Ascending aorta (tissue), 2 donors: ENCODE measurements at regions of chr21 and their contacts with region 1.

Region 1: DNA sequence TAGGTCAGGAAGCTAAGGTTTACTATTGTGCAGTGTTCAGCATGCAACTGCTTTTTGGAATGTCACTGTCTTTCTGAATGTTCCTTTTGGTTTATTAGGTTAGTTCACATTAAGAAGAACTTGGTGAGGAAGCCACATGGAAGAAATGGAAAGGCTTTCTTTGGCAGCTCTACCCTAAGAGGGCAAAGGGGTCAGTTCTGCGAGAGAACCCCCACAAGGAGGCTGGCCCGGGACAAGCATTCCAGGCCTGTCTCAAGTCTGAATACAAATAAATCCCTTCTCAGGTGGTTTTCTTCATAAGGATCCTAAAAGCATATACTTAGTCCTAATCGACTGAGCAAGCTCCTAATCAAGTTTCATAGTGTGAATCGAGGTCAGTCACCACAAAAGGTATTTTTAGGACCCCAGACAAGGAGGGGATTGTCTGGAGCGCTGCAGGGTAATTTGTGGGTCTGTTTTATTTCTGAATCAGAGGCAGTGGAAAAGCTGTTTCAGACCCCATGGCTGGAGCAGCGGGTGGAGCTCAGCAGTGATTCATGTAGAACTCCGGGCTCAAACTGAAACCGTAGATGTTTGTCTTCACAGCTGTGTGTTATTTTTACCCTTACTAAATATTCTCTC is 63.3 kb downstream of the ERG start:
- DNase-seq: peak in 1 of 2 donors; percentile 86
- H3K4me3 ChIP-seq: peak overlapping the region in 1 of 2 donors; percentile 57
- H3K27ac ChIP-seq: peak overlapping the region; percentile 89 to 92
- H3K4me1 ChIP-seq: peaks cover 15 to 60% of the 10 kb centered on the region in 2 donors
- H3K27me3 ChIP-seq: no peaks in the 10 kb centered on the region
- CTCF ChIP-seq: no peak

Region 2: GRCh38 chr21:37958537-37958936 is 476.5 kb before region 1 on chr21:
- intact Hi-C with region 1: no loop called
- DNase-seq: no peak
- H3K4me3 ChIP-seq: no peak overlapping the region
- H3K27ac ChIP-seq: no peak overlapping the region
- H3K4me1 ChIP-seq: no peaks in the 10 kb centered on the region
- H3K27me3 ChIP-seq: no peaks in the 10 kb centered on the region
- CTCF ChIP-seq: no peak

Region 3: DNA sequence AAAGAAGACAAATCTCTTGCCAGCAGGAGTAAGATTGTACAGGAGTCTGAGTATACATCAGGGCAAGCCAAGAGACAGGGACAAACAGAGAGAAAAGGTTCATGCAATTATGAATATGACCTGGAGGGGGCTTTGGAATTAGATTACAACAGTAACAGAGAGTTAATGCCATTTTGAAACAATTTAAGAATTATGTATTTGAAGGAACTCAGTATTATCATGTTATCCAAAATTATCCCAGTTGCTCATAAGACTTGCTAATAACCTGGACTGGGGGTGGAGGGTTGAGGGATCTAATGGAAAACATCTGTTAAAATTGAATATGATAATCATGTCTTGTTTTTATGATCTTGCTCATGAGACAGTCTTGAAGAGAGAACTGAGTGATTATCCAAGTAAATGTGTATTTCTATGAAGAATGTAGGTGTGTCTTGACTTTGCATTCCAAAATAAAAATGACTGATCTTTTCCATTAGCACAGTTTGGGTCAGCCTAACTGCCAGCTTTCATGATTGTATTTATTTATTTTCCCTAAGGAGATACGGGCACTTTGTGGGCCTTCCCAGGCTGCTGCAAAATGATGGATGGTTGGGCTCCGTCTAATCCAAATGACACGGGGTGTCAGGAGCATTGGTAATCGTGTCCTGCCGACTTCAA is 54.4 kb before region 1 on chr21:
- intact Hi-C with region 1: loop called (anchors 5 kb)
- DNase-seq: peak in 1 of 2 donors; percentile 78
- H3K4me3 ChIP-seq: peak overlapping the region in 1 of 2 donors; percentile 17
- H3K27ac ChIP-seq: peak overlapping the region; percentile 75 to 89
- H3K4me1 ChIP-seq: peaks cover 17 to 41% of the 10 kb centered on the region in 2 donors
- H3K27me3 ChIP-seq: no peaks in the 10 kb centered on the region
- CTCF ChIP-seq: peak; percentile 7 to 33 (median 28)

Region 4: DNA sequence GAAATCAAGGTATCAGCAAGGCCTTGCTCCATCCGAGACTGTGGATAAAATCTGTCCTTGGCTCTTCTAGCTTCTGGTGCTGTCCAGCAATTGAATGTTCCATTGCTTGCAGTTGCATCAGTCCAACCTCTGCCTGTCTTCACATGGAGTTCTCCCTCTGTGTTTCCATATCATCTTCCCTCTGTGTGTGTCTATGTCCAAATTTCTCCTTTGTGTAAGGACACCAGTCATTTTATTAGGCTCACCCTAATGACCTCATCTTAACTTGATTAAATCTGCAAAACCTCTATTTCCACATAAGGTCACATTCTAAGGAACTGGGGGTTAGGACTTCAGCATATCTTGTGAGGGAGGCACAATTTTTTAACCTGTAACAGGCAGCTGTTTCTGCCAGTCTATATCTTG is 21.0 kb before region 1 on chr21:
- intact Hi-C with region 1: loop called (anchors 2 kb)
- DNase-seq: no peak
- H3K4me3 ChIP-seq: no peak overlapping the region
- H3K27ac ChIP-seq: peak overlapping the region in 1 of 2 donors; percentile 14
- H3K4me1 ChIP-seq: peaks cover 4 to 12% of the 10 kb centered on the region in 2 donors
- H3K27me3 ChIP-seq: no peaks in the 10 kb centered on the region
- CTCF ChIP-seq: no peak

Region 5: GRCh38 chr21:38476385-38476784 is 41.4 kb after region 1 on chr21:
- intact Hi-C with region 1: no loop called
- DNase-seq: no peak
- H3K4me3 ChIP-seq: no peak overlapping the region
- H3K27ac ChIP-seq: peak overlapping the region; percentile 7 to 70
- H3K4me1 ChIP-seq: peaks cover 3 to 30% of the 10 kb centered on the region in 2 donors
- H3K27me3 ChIP-seq: no peaks in the 10 kb centered on the region
- CTCF ChIP-seq: no peak